BJ (cell line): ENCODE measurements at regions of chr2 and their contacts with region 1.

Region 1: GRCh38 chr2:171482877-171483276 is 39.4 kb upstream of the CYBRD1 start:
- DNase-seq: peak; percentile 37
- H3K4me3 ChIP-seq: no peak overlapping the region
- H3K27me3 ChIP-seq: no peaks in the 10 kb centered on the region
- CTCF ChIP-seq: no peak

Region 2: DNA sequence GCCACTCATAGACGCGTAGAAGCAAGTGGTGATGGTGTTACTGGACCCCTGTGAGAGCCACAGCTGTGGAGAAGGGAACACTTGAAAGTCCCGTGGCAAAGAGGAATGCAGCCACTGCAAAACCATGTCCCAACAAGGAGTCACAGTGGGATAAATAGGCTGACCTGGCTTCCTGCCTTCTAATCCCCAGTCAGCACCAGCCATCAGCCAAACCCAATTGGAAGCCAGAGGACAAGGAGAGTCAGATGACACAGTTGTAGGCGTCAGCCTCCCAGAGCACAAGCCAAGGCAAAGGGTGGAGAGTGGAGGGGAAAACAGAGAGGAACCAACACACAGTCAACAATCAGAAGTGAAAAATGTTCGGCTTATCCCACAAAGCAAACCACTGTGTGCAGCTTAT is 33.9 kb after region 1 on chr2:
- CTCF ChIA-PET with region 1: no interaction called
- POLR2A ChIA-PET with region 1: interaction called, 18 read pairs
- DNase-seq: no peak
- H3K4me3 ChIP-seq: no peak overlapping the region
- H3K27me3 ChIP-seq: no peaks in the 10 kb centered on the region
- CTCF ChIP-seq: no peak

Region 3: GRCh38 chr2:172613040-172613439 is 1130.2 kb after region 1 on chr2:
- CTCF ChIA-PET with region 1: no interaction called
- POLR2A ChIA-PET with region 1: no interaction called
- DNase-seq: no peak
- H3K4me3 ChIP-seq: no peak overlapping the region
- H3K27me3 ChIP-seq: no peaks in the 10 kb centered on the region
- CTCF ChIP-seq: no peak